Naive thymus-derived CD4-positive, alpha-beta T cell (primary cell): ENCODE measurements at regions of chr7 and their contacts with region 1.

Region 1: GRCh38 chr7:2451171-2452073 is 24.8 kb downstream of the GRIFIN start:
- DNase-seq: peak; percentile 50 to 83 (median 68)
- ATAC-seq: peak; percentile 95
- H3K4me3 ChIP-seq: peak overlapping the region; percentile 48
- H3K4me3 Mint-ChIP-seq: peak overlapping the region; percentile 51 to 76 (median 61)
- H3K27ac ChIP-seq: no peak overlapping the region
- H3K27ac Mint-ChIP-seq: peak overlapping the region in 1 of 9 donors; percentile 29
- H3K4me1 ChIP-seq: peaks cover 6 to 8% of the 10 kb centered on the region in 2 donors
- H3K4me1 Mint-ChIP-seq: peaks cover 0 to 8% (median 8%) of the 10 kb centered on the region in 7 donors
- H3K27me3 ChIP-seq: no peaks in the 10 kb centered on the region
- H3K27me3 Mint-ChIP-seq: peaks cover 0 to 21% (median 0%) of the 10 kb centered on the region in 5 donors

Region 2: GRCh38 chr7:1961701-1962276 is 489.6 kb before region 1 on chr7:
- CTCF ChIA-PET with region 1: no interaction called
- POLR2A ChIA-PET with region 1: no interaction called
- intact Hi-C with region 1: no loop called
- DNase-seq: peak in 2 of 9 donors; percentile 25 to 48
- ATAC-seq: peak; percentile 64
- H3K4me3 ChIP-seq: no peak overlapping the region
- H3K4me3 Mint-ChIP-seq: peak overlapping the region in 1 of 10 donors; percentile 5
- H3K27ac ChIP-seq: no peak overlapping the region
- H3K27ac Mint-ChIP-seq: peak overlapping the region; percentile 9 to 83 (median 57)
- H3K4me1 ChIP-seq: peaks cover 0 to 5% of the 10 kb centered on the region in 2 donors
- H3K4me1 Mint-ChIP-seq: peaks cover 2 to 17% (median 3%) of the 10 kb centered on the region in 7 donors
- H3K27me3 ChIP-seq: no peaks in the 10 kb centered on the region
- H3K27me3 Mint-ChIP-seq: peaks cover 0 to 8% (median 0%) of the 10 kb centered on the region in 5 donors

Region 3: DNA sequence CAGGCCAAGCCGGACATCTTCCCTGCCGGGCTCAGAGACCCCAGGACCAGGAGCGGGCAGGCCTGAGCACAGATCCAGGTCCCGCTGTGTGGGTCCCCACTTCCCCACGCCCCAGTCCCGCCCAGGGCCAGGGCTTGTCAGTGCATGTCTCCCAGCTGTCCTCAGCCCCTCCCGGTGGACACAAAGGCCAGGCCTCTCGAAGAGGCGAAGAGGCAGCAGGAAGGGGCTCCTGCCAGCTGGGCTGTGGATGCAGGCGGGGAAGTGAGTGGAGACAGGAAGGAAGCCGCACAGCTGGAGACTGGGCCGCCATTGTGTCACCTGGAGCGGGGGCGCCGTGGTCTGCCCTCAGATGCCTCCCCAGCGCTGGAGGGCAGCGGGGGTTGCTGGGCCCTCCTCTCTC is 20.0 kb after region 1 on chr7:
- CTCF ChIA-PET with region 1: interaction called, 9 read pairs
- POLR2A ChIA-PET with region 1: no interaction called
- intact Hi-C with region 1: loop called in 1 of 2 experiments (anchors 1 kb)
- DNase-seq: no peak
- ATAC-seq: no peak
- H3K4me3 ChIP-seq: no peak overlapping the region
- H3K4me3 Mint-ChIP-seq: no peak overlapping the region
- H3K27ac ChIP-seq: no peak overlapping the region
- H3K27ac Mint-ChIP-seq: no peak overlapping the region
- H3K4me1 ChIP-seq: no peaks in the 10 kb centered on the region
- H3K4me1 Mint-ChIP-seq: peaks cover 2 to 6% (median 5%) of the 10 kb centered on the region in 7 donors
- H3K27me3 ChIP-seq: no peaks in the 10 kb centered on the region
- H3K27me3 Mint-ChIP-seq: peaks cover 0 to 13% (median 4%) of the 10 kb centered on the region in 5 donors

Region 4: DNA sequence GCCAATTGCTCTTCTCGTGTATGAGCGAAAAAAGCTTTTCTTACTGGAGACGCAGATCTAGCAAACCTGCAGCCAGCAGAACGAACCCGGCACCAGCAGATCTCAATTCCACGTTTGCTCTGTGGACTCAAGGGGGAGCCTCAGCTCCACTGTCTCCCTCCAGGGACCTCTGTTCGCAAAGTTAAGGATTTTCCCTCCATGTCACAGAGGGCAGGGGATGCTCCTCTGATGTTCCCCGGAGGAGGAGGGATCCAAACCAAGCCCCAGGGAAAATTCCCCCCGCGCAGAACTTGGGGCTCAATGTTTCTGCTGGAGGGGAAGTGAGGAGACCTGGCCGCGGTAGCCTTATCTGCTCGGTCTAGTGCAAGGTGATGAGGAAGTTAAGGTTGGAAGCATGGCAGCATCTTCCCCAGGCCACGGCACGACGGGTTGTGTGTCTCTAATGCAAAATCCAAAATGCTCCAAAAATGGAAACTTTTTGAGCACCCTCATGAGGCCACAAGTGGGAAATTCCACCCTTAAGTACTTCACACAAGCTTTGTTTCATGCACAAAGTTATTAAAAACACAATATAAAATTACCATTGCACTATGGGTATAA is 116.4 kb after region 1 on chr7:
- CTCF ChIA-PET with region 1: interaction called, 4 read pairs
- POLR2A ChIA-PET with region 1: interaction called, 3 read pairs
- intact Hi-C with region 1: loop called in 1 of 2 experiments (anchors 1 kb)
- DNase-seq: peak in 4 of 9 donors; percentile 13 to 37 (median 20)
- ATAC-seq: peak; percentile 50
- H3K4me3 ChIP-seq: no peak overlapping the region
- H3K4me3 Mint-ChIP-seq: no peak overlapping the region
- H3K27ac ChIP-seq: no peak overlapping the region
- H3K27ac Mint-ChIP-seq: no peak overlapping the region
- H3K4me1 ChIP-seq: no peaks in the 10 kb centered on the region
- H3K4me1 Mint-ChIP-seq: peaks cover 3 to 15% (median 6%) of the 10 kb centered on the region in 7 donors
- H3K27me3 ChIP-seq: no peaks in the 10 kb centered on the region
- H3K27me3 Mint-ChIP-seq: no peaks in the 10 kb centered on the region

Region 5: DNA sequence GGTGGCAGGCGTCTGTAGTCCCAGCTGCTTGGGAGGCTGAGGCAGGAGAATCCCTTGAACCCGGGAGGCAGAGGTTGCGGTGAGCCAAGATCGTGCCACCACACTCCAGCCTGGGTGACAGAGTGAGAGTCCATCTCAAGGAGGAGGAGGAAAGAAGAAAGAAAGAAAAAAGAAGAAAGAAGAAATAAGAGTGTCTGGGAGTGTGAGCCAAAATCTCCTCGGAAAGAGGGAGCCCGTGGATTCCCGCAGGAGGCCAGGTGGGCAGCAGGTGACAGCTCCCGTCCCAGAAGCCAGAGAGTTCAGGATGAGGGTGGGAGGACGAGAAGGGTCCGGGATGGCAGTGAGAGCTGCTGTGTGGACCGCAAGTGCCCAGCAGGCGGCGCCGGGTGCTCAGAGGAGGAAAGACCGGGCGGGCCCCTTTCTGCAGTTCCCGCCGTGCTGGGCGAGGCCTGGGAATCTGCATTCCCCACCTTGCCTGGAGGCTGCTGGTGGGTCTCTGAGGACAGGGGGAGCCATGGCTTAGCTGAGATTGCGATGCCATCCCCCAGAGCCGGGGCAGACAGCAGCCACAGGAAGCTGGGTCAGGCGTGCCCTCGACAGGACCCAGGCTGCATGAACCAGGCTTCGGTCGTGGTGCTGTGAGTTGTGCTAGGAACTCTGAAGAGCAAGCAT is 219.4 kb after region 1 on chr7:
- CTCF ChIA-PET with region 1: no interaction called
- POLR2A ChIA-PET with region 1: no interaction called
- intact Hi-C with region 1: loop called in 1 of 2 experiments (anchors 2 kb)
- DNase-seq: peak; percentile 30 to 70 (median 59)
- ATAC-seq: peak; percentile 83
- H3K4me3 ChIP-seq: no peak overlapping the region
- H3K4me3 Mint-ChIP-seq: peak overlapping the region in 1 of 10 donors; percentile 49
- H3K27ac ChIP-seq: no peak overlapping the region
- H3K27ac Mint-ChIP-seq: peak overlapping the region in 3 of 9 donors; percentile 26 to 47 (median 34)
- H3K4me1 ChIP-seq: peaks cover 6% of the 10 kb centered on the region in 2 donors
- H3K4me1 Mint-ChIP-seq: peaks cover 0 to 13% (median 4%) of the 10 kb centered on the region in 7 donors
- H3K27me3 ChIP-seq: no peaks in the 10 kb centered on the region
- H3K27me3 Mint-ChIP-seq: peaks cover 0 to 35% (median 4%) of the 10 kb centered on the region in 5 donors

Region 6: DNA sequence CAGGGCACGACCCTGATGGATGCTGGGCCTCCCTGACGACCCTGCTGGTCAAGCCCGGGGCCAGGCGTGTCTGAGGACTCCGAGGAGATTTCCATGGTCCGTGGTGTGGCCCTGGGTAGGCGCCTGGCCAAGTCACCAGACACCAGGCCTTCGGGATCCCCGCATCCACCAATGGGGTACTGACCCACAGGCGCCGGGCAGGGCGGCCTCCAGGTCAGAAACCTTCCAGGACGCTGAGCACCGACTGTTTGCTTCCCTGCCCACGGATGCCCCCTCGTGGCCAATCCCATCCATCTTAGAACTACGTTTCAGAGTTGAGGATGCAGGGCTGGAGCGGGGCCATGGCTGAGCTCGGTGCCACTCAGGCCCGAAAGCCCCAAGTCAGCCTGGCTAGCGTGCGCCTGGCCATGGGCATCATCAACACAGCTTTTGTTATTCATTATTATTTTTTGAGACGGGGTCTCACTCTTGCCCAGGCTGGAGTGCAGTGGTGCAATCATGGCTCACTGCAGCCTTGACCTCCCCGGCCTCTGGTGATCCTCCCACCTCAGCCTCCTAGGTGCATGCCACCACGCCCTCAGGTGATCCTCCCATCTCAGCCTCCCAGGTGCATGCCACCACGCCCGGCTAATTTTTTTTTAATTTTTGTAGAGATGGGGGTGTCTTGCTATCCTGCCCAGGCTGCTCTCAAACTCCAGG is 229.5 kb after region 1 on chr7:
- CTCF ChIA-PET with region 1: interaction called, 5 read pairs
- POLR2A ChIA-PET with region 1: no interaction called
- intact Hi-C with region 1: loop called in 1 of 2 experiments (anchors 2 kb)
- DNase-seq: peak in 7 of 9 donors; percentile 25 to 60 (median 32)
- ATAC-seq: peak; percentile 74
- H3K4me3 ChIP-seq: no peak overlapping the region
- H3K4me3 Mint-ChIP-seq: no peak overlapping the region
- H3K27ac ChIP-seq: no peak overlapping the region
- H3K27ac Mint-ChIP-seq: no peak overlapping the region
- H3K4me1 ChIP-seq: no peaks in the 10 kb centered on the region
- H3K4me1 Mint-ChIP-seq: no peaks in the 10 kb centered on the region
- H3K27me3 ChIP-seq: no peaks in the 10 kb centered on the region
- H3K27me3 Mint-ChIP-seq: peaks cover 1 to 6% (median 2%) of the 10 kb centered on the region in 5 donors

Region 7: DNA sequence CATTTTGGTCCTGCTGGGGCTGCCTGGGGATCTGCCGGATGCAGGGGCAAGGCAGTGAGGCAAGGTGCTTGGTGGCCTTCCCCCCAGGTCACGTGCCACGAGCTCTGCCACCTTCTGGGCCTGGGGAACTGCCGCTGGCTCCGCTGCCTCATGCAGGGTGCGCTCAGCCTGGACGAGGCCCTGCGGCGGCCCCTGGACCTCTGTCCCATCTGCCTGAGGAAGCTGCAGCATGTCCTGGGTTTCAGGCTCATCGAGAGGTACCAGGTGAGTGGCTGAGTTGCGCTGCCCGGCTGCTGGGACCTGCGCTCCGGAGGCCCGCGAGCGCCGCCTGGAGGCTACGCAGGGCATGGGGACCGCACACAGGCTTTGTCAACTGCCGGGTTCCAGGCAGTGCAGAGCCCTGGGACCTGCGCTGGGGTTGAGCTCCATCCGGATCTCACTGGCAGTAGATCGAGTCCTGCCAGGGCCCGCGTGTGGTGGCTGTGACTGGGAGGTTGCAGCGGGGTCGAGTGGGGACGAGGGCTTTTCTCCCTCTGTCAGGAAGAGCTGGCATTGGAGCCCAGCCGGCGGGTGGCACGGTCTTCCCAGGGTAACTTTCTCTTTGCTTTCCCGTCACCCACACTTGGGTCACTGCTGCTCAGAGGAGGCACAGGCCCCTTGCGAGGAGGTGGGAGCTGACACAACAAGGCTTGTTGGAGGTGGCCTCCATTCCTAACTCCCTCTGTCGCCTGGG is 258.3 kb after region 1 on chr7:
- CTCF ChIA-PET with region 1: interaction called, 10 read pairs
- POLR2A ChIA-PET with region 1: interaction called, 4 read pairs
- intact Hi-C with region 1: loop called in 1 of 2 experiments (anchors 1 kb)
- DNase-seq: peak; percentile 59 to 84 (median 81)
- ATAC-seq: peak; percentile 90
- H3K4me3 ChIP-seq: peak overlapping the region; percentile 37
- H3K4me3 Mint-ChIP-seq: peak overlapping the region in 7 of 10 donors; percentile 25 to 73 (median 60)
- H3K27ac ChIP-seq: no peak overlapping the region
- H3K27ac Mint-ChIP-seq: peak overlapping the region in 2 of 9 donors; percentile 25 to 63
- H3K4me1 ChIP-seq: peaks cover 24 to 35% of the 10 kb centered on the region in 2 donors
- H3K4me1 Mint-ChIP-seq: peaks cover 15 to 39% (median 31%) of the 10 kb centered on the region in 7 donors
- H3K27me3 ChIP-seq: no peaks in the 10 kb centered on the region
- H3K27me3 Mint-ChIP-seq: peaks cover 0 to 17% (median 8%) of the 10 kb centered on the region in 5 donors

Region 8: GRCh38 chr7:2886900-2887299 is 435.5 kb after region 1 on chr7:
- CTCF ChIA-PET with region 1: interaction called, 5 read pairs
- POLR2A ChIA-PET with region 1: no interaction called
- intact Hi-C with region 1: loop called in 1 of 2 experiments (anchors 5 kb)
- DNase-seq: peak in 8 of 9 donors; percentile 28 to 59 (median 50)
- ATAC-seq: peak; percentile 89
- H3K4me3 ChIP-seq: no peak overlapping the region
- H3K4me3 Mint-ChIP-seq: peak overlapping the region in 4 of 10 donors; percentile 16 to 38 (median 36)
- H3K27ac ChIP-seq: no peak overlapping the region
- H3K27ac Mint-ChIP-seq: peak overlapping the region in 4 of 9 donors; percentile 3 to 57 (median 24)
- H3K4me1 ChIP-seq: no peaks in the 10 kb centered on the region
- H3K4me1 Mint-ChIP-seq: peaks cover 0 to 9% (median 6%) of the 10 kb centered on the region in 7 donors
- H3K27me3 ChIP-seq: no peaks in the 10 kb centered on the region
- H3K27me3 Mint-ChIP-seq: no peaks in the 10 kb centered on the region